Caco-2 (cell line): ENCODE measurements at regions of chr17 and their contacts with region 1.

Region 1: DNA sequence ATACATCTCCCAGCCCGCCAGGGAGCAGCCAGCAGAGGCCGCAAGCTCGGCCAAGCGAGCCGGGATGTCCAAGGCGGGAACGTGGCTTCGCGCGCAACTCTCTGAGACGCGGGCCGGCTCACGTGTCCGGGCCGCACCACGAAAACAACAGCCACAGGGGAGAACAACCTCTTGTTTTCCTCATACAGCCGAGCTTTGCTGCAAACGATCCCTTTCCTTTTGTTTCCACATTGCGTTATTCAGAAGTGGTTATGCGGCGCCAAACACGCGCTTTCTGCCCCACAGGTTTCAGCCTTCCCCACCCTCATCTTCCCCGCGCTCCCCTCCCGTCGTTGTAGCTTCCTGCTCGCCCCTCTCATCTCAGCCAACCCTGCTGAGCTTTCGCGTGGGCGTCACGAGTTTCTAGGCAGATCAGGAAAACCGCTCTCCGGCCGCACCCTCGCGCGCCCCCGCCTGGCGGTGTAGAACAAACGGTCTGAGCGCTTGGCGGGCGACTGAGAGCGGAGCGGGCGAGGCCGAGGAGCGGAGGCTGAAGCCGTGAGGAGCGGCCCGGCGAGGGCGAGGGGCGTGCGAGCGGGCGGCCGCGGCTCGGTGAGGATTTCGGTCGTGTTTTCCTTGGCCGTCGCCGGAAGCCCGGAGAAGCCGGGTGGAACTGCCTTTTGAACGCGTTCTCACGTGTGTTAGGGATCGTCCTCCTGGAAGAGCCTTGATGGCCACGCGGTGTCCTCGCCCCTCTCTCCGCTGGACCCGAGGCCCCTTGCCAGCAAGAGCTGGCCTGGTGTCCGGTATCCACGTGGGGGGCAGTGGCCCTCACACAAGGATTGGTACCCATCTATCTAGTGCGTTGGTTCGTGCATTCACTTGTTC is 6.6 kb upstream of the SMARCD2 start:
- DNase-seq: peak; percentile 98 to 99
- H3K4me3 ChIP-seq: peak overlapping the region; percentile 84
- H3K4me3 Mint-ChIP-seq: peak overlapping the region; percentile 90
- H3K27ac Mint-ChIP-seq: peak overlapping the region; percentile 99
- H3K4me1 ChIP-seq: peaks cover 4% of the 10 kb centered on the region; the same call in 1 of the 2 replicates
- H3K4me1 Mint-ChIP-seq: peaks cover 11% of the 10 kb centered on the region
- H3K27me3 ChIP-seq: no peaks in the 10 kb centered on the region
- H3K27me3 Mint-ChIP-seq: no peaks in the 10 kb centered on the region
- CTCF ChIP-seq: peak; percentile 59 to 89

Region 2: GRCh38 chr17:63859257-63859656 is 10.2 kb after region 1 on chr17:
- CTCF ChIA-PET with region 1: interaction called, 11 read pairs
- POLR2A ChIA-PET with region 1: interaction called, 4 read pairs
- intact Hi-C with region 1: no loop called
- DNase-seq: no peak
- H3K4me3 ChIP-seq: no peak overlapping the region
- H3K4me3 Mint-ChIP-seq: no peak overlapping the region
- H3K27ac Mint-ChIP-seq: no peak overlapping the region
- H3K4me1 ChIP-seq: no peaks in the 10 kb centered on the region
- H3K4me1 Mint-ChIP-seq: no peaks in the 10 kb centered on the region
- H3K27me3 ChIP-seq: no peaks in the 10 kb centered on the region
- H3K27me3 Mint-ChIP-seq: no peaks in the 10 kb centered on the region
- CTCF ChIP-seq: no peak